Panc1 (cell line): ENCODE measurements at regions of chr22 and their contacts with region 1.

Region 1: DNA sequence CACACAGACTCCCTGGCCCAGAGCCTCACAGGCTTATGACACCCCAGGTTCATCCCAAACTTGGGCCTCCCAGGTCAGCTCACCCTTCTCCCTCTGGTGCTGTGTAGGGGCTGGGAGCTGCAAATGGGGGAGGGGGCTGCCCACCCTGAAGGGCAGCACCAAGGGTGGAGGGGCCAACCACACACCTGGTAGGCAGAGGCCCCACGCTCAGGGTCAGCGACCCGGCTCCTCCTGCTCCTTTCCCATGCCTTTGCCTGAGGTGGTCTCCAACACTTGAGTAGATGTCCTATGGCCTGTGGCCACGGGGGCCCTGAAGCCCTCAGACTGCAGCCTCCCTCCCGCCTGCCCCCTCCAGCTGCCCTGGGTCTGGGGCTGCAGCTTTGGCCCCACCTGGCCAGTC is 3.4 kb downstream of the DGCR6 start:
- DNase-seq: no peak
- ATAC-seq: no peak
- H3K4me3 ChIP-seq: no peak overlapping the region
- H3K27ac ChIP-seq: no peak overlapping the region
- H3K4me1 ChIP-seq: no peaks in the 10 kb centered on the region
- H3K27me3 ChIP-seq: no peaks in the 10 kb centered on the region
- CTCF ChIP-seq: no peak

Region 2: DNA sequence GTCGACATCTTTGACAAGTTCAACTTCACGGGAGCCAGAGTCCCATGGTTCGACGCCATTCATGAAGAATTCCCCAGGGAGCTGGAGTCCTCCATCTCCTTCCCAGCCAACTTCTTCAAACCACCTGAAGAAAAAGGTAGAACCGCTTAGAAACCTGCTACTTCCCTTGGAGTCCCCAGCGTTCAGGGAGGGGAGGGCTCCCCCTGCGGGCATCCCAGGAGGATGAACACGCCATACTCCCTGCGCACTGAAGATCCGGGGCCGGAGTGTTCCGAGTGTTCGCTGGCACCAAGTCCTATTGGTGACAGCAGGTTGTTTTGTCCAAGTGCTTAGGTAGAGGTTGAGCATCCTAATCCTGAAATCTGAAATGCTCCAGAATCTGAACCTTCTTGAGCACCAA is 78.2 kb after region 1 on chr22:
- CTCF ChIA-PET with region 1: no interaction called
- POLR2A ChIA-PET with region 1: no interaction called
- in situ Hi-C with region 1: no loop called
- intact Hi-C with region 1: no loop called
- DNase-seq: no peak
- ATAC-seq: peak; percentile 84
- H3K4me3 ChIP-seq: no peak overlapping the region
- H3K27ac ChIP-seq: no peak overlapping the region
- H3K4me1 ChIP-seq: no peaks in the 10 kb centered on the region
- H3K27me3 ChIP-seq: no peaks in the 10 kb centered on the region
- CTCF ChIP-seq: no peak

Region 3: DNA sequence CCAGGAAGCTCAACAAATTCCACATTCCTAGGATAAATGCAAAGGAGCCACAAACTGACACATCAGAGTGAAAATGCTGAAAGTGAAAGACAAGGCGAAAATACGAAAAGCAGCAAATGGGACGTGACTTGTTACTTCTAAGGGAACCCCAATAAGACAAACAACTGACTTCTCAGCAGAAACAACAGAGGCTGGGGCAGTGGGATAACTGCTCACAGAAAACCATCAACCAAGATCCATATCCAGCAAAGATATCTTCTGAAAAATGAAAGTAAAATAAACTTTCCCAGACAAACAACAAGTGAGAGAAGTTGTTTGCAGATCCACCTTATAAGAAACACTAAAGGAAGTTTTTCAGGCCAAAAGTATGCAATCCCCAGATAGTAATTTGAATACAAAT is 140.6 kb after region 1 on chr22:
- CTCF ChIA-PET with region 1: interaction called, 10 read pairs
- POLR2A ChIA-PET with region 1: no interaction called
- in situ Hi-C with region 1: no loop called
- intact Hi-C with region 1: no loop called
- DNase-seq: no peak
- ATAC-seq: no peak
- H3K4me3 ChIP-seq: no peak overlapping the region
- H3K27ac ChIP-seq: no peak overlapping the region
- H3K4me1 ChIP-seq: no peaks in the 10 kb centered on the region
- H3K27me3 ChIP-seq: no peaks in the 10 kb centered on the region
- CTCF ChIP-seq: no peak

Region 4: DNA sequence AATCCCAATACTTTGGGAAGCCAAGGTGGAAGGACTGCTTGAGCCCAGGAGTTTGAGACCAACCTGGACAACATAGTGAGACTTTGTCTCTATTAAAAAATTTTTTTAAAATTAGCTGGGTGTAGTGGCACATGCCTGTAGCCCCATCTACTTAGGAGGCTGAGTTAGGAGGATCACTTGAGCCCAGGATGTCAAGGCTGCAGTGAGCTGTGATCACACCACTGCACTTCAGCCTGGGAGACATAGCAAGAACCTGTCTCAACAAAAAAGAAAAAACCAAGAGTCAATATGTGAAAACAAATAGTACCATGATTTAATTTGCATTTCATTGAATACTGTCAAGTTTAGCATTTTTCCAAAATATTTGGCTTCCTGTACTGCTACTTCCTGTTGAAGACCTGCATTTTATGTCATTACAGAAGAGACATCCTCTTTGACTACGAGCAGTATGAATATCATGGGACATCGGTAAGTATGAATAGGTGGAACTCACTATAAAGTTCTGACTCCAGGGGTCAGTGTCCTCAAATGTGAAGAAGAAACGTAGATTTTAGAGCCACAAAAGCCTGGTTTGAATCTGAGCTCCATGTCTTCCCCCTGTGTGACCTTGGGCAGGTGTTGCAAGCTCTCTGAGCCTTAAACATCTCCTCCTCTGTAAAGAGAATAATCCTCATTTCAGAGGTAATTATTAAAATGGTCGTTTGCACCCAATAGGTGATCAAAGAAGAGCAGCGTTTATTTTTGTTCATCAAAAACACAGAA is 586.2 kb after region 1 on chr22:
- CTCF ChIA-PET with region 1: no interaction called
- POLR2A ChIA-PET with region 1: no interaction called
- in situ Hi-C with region 1: no loop called
- intact Hi-C with region 1: no loop called
- DNase-seq: no peak
- ATAC-seq: no peak
- H3K4me3 ChIP-seq: no peak overlapping the region
- H3K27ac ChIP-seq: no peak overlapping the region
- H3K4me1 ChIP-seq: no peaks in the 10 kb centered on the region
- H3K27me3 ChIP-seq: no peaks in the 10 kb centered on the region
- CTCF ChIP-seq: no peak